ENCODE measurements at regions of chr21 and their contacts with region 1.

Region 1: DNA sequence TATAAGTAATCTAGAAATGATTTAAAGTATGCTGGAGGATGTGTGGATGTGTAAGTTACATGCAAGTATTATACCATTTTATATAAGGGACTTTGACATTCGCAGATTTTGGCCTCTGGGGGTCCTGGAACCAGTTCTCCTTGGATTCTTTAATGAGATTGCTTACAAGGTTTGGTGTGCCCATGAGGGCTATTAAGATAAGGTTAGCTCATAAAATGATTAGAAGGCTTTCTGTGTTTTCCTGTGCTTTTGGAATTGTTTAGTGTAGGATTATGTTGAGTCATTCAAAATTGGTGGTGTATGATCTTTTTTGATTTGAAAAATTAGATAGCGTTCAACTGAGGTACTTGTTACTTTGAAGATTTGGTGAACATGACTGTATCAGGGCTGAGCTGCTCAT is 5.6 kb downstream of the USP25 start:
- DNase-seq: peak; percentile 8
- ATAC-seq: no peak
- H3K4me3 ChIP-seq: 0 out of 2 replicates have a peak overlapping the region, but pooled peaks have one; percentile 47
- H3K27ac ChIP-seq: no peak overlapping the region
- H3K4me1 ChIP-seq: peaks cover 41% of the 10 kb centered on the region
- H3K27me3 ChIP-seq: no peaks in the 10 kb centered on the region
- CTCF ChIP-seq: 0 out of 2 replicates have a peak, but pooled peaks have one; percentile 9

Region 2: GRCh38 chr21:15774590-15774989 is 39.2 kb after region 1 on chr21:
- CTCF ChIA-PET with region 1: no interaction called
- POLR2A ChIA-PET with region 1: no interaction called
- intact Hi-C with region 1: loop called (anchors 5 kb)
- DNase-seq: peak; percentile 52
- ATAC-seq: peak; percentile 21; the same call in 1 of the 2 replicates
- H3K4me3 ChIP-seq: no peak overlapping the region
- H3K27ac ChIP-seq: no peak overlapping the region
- H3K4me1 ChIP-seq: peaks cover 22% of the 10 kb centered on the region
- H3K27me3 ChIP-seq: no peaks in the 10 kb centered on the region
- CTCF ChIP-seq: no peak